ENCODE measurements at regions of chr2 and their contacts with region 1.

Region 1: GRCh38 chr2:42095923-42096408 is 48.1 kb downstream of the PKDCC start:
- DNase-seq: peak; percentile 68 to 81
- ATAC-seq: peak; percentile 57 to 87 (median 74)
- H3K4me3 ChIP-seq: no peak overlapping the region
- H3K27ac ChIP-seq: no peak overlapping the region
- H3K4me1 ChIP-seq: no peaks in the 10 kb centered on the region
- H3K27me3 ChIP-seq: no peaks in the 10 kb centered on the region
- CTCF ChIP-seq: peak; percentile 88

Region 2: DNA sequence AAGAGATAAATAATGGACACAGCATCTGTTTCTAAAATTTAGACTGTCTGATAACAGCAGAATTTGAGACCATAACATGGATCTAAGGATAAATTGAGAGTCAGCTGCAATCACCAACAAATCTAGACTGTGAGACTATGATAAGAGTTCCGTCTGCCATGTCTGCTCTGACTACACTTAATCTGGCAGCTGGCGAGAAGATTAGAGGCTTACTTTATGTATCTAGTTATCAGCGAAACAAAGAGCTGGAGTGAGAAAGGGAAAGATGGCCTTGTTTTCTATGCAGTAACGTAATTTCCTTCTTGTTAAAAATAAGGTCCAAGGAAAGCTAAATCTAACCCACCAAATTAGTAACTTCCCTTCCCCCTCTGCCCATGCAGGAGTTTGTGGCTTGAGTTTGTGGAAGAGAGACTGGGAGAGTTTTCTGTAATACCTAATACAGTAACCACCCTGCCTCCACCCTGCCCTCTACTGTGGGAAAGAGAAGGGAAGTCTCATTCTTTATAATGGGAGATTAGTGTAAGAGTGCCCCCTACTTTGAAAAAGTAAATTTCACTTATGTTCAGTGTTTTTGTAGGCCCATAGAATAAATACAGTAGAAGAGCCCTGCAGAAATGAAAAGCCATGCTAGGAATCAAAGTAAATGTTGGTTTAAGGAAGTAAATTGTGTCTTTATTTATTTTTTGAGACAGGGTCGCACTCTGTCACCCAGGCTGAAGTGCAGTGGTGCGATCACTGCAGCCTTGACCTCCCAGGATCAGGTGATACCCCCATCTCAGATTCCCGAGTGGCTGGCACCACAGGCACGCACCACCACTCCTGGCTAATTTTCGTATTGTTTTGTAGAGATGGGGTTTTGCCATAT is 100.7 kb after region 1 on chr2:
- intact Hi-C with region 1: loop called in 1 of 2 experiments (anchors 5 kb)
- DNase-seq: no peak
- ATAC-seq: no peak
- H3K4me3 ChIP-seq: no peak overlapping the region
- H3K27ac ChIP-seq: no peak overlapping the region
- H3K4me1 ChIP-seq: no peaks in the 10 kb centered on the region
- H3K27me3 ChIP-seq: no peaks in the 10 kb centered on the region
- CTCF ChIP-seq: peak; percentile 26

Region 3: GRCh38 chr2:42238644-42239288 is 142.8 kb after region 1 on chr2:
- intact Hi-C with region 1: loop called (anchors 2 to 5 kb)
- DNase-seq: no peak
- ATAC-seq: peak; percentile 62 to 88 (median 84)
- H3K4me3 ChIP-seq: no peak overlapping the region
- H3K27ac ChIP-seq: no peak overlapping the region
- H3K4me1 ChIP-seq: no peaks in the 10 kb centered on the region
- H3K27me3 ChIP-seq: no peaks in the 10 kb centered on the region
- CTCF ChIP-seq: peak; percentile 46

Region 4: DNA sequence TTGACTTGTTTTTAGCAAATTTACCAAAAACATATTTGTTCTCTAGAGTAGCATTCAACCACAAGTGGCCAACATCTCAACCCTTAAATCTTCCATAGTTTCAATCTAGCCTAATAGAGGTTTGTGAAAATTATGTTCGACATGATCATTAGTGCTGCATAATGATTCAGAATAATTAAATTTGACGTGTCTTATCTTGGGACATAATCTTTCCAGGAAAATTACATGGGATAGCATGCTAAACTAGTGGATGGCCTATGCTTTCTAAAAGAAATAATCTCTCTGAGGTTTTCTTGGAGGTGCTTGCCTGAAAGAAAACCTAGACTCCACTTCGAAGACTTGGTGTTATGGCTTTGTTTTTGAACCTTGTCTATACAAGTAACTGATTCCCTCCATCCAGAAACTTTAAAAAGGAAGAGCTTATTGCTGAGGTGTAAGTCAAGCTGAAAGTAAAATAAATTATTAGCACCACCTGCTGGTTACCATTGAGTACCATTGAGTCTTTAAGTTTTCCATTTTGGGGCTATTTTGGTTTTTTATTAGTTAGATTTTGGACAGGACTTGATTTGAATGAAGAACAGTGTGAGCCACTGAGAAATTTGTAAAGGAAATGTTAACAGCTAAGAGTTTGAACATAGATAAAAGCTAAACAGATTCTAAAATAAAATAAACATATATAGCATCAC is 232.3 kb after region 1 on chr2:
- intact Hi-C with region 1: loop called in 1 of 2 experiments (anchors 2 kb)
- DNase-seq: no peak
- ATAC-seq: no peak
- H3K4me3 ChIP-seq: no peak overlapping the region
- H3K27ac ChIP-seq: no peak overlapping the region
- H3K4me1 ChIP-seq: no peaks in the 10 kb centered on the region
- H3K27me3 ChIP-seq: no peaks in the 10 kb centered on the region
- CTCF ChIP-seq: peak; percentile 46

Region 5: DNA sequence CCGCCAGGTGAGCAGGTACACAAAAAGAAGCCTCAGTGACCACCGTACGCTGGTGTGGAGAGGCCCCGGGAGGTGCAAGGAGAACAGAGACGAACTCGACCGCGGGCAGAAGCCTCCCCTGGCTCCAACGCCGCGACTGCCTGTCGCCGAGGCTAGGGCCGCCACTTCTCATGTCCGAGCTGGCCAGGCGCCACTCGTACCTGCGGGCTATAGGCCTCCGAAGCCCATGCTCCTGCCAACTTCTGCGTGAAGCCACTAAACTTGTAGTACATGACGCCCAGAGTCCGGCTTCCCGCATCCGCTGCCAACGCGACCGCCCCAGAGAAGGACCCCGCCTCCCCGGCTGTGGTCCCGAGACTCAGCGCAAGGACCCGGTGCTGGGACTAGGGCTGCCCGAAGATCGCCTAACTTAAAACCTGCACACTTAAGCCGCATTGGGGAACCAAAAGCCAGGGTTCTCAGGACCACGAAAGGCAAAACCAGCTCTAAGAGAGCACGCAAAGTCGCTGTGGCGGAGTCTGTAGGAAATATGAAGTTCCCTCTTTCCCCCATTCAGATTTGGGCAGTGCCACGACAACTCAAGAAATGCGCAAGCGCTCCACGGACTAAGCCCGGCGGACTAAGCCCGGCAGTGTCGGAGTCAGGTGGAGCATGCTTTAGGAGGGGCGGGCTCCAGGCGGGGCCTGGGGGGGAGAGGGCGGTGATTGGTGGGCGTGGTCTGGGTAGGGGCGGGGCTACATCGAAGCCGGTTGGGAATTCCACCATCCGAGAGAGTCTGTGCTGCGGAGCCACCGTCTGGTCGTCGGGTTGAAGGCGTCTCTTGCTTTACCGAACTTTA is 265.1 kb after region 1 on chr2 and contains the start of gene COX7A2L:
- intact Hi-C with region 1: loop called (anchors 2 kb)
- DNase-seq: peak; percentile 96 to 99
- ATAC-seq: peak; percentile 97 to 100 (median 99)
- H3K4me3 ChIP-seq: peak within 1 kb of the TSS; percentile 81
- H3K27ac ChIP-seq: peak within 1 kb of the TSS; percentile 93
- H3K4me1 ChIP-seq: peaks cover 37% of the 10 kb centered on the region
- H3K27me3 ChIP-seq: no peaks in the 10 kb centered on the region
- CTCF ChIP-seq: peak; percentile 28
- total RNA-seq, gene COX7A2L: 58.1 to 85.0 (median 62.4) TPM